ENCODE measurements at regions of chr17 and their contacts with region 1.

Region 1: GRCh38 chr17:51761105-51761504 is 397.4 kb downstream of the CA10 start:
- DNase-seq: no peak
- H3K4me3 ChIP-seq: no peak overlapping the region
- H3K27ac ChIP-seq: no peak overlapping the region
- H3K4me1 ChIP-seq: no peaks in the 10 kb centered on the region
- H3K27me3 ChIP-seq: peaks cover 0 to 22% of the 10 kb centered on the region in 2 donors
- CTCF ChIP-seq: no peak
- POLR2A ChIP-seq: no peak

Region 2: DNA sequence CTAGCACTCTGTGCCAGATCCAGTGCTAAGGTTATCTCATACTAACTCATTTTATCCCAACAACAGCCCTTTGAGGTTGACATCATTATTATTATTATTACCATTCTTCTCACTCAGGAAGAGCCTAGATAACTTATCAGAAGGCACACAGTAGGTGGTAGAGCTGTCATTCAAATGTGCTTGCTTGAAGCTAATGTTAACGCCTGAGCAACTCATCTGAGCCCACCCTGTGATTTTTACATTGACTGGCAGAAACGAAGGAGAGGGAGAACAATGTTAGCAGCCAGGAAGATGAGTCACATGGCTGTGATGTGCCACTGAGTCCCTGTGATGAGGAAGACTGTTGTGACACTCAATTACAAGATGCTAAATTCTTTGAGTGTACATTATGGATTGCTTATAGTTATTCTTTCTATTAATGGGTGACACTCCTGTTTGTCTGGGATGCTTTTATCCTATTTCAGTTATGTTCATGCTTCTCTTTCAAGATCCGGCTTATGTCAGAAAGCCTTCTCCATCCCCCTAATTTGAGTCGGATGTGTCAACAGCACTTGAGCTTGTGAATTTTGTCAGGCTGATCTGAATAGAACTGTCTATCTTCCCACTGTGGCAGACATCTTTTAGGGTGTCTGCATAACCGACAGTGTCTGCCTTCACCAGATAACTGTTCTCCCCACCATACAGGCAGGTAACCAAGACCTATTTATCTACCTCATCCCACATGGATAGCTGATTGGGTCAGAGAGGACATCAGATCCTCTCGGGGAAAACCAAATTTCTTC is 29.0 kb before region 1 on chr17:
- intact Hi-C with region 1: loop called (anchors 1 kb)
- DNase-seq: no peak
- H3K4me3 ChIP-seq: no peak overlapping the region
- H3K27ac ChIP-seq: no peak overlapping the region
- H3K4me1 ChIP-seq: no peaks in the 10 kb centered on the region
- H3K27me3 ChIP-seq: no peaks in the 10 kb centered on the region
- CTCF ChIP-seq: no peak
- POLR2A ChIP-seq: no peak

Region 3: GRCh38 chr17:51778842-51779241 is 17.7 kb after region 1 on chr17:
- intact Hi-C with region 1: no loop called
- DNase-seq: no peak
- H3K4me3 ChIP-seq: no peak overlapping the region
- H3K27ac ChIP-seq: no peak overlapping the region
- H3K4me1 ChIP-seq: no peaks in the 10 kb centered on the region
- H3K27me3 ChIP-seq: peaks cover 0 to 4% of the 10 kb centered on the region in 2 donors
- CTCF ChIP-seq: no peak
- POLR2A ChIP-seq: no peak